AG04449 (cell line): ENCODE measurements at regions of chr16 and their contacts with region 1.

Region 1: DNA sequence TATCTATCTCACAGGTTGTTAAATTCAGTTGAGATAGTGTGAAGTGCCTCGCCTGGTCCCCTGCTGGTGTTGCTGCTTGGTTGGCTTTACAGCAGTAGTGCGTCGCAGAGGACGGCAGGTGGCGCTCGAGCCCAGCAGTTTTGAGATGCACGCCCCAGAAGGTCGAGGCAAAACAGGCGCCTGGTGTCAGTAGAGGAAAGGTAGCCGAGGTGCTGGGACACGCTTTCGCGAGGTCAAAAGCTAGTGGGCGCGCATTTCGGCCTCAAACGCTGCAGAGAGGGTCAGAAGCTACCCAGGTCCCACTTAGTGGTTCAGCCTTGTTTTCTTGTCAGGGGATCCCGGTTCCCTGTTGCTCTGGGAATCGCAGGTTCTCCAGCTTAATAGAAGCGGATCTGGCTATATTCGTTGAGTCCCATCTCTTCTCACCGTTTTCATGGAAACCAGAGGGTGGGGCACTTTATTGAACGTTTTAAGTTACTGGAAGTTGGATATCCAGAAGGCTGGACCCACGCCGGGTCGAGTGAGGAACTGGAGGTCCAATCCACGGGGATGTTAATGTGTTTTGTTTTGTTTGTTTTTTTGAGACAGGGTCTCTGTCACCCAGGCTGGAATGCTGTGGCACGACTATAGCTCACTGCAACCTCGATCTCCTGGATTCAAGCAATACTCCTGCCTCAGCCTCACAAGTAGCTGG is 10.3 kb upstream of the ZFP90 start:
- DNase-seq: no peak
- H3K4me3 ChIP-seq: peak overlapping the region; percentile 32
- CTCF ChIP-seq: peak; percentile 97

Region 2: DNA sequence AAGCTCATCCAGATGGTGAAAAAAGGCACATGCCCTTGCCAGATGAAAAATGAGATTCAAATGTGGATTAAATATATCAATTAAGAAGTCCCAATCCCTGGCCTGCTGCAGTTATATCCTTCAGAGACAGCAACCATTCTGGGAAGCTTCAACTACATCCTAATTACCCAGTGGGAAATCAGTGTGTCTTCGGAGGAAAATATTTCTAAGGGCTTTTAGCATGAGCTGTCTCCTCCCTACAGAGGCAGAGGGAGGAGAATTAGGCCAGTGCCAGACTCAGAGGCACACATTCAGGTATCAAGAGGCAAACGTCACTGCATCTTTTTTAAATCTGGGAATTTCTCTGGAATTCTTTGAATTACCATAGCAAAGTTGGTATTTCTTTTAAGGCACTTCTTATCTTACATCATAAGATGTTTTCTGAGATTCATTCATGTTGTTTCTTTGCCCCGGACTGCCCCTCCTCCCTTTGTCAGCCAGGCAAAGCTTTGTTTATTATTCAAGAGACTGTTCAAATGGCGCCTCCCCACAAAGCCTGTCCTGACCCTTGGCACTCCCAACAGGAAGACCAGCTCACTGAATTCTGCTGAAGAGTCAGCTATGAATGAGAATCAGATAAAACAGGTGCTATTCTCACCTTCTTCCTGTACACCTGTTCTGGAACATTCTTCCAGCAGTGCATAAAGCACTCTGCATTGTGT is 42.2 kb before region 1 on chr16:
- CTCF ChIA-PET with region 1: no interaction called
- POLR2A ChIA-PET with region 1: no interaction called
- DNase-seq: no peak
- H3K4me3 ChIP-seq: no peak overlapping the region
- CTCF ChIP-seq: no peak

Region 3: DNA sequence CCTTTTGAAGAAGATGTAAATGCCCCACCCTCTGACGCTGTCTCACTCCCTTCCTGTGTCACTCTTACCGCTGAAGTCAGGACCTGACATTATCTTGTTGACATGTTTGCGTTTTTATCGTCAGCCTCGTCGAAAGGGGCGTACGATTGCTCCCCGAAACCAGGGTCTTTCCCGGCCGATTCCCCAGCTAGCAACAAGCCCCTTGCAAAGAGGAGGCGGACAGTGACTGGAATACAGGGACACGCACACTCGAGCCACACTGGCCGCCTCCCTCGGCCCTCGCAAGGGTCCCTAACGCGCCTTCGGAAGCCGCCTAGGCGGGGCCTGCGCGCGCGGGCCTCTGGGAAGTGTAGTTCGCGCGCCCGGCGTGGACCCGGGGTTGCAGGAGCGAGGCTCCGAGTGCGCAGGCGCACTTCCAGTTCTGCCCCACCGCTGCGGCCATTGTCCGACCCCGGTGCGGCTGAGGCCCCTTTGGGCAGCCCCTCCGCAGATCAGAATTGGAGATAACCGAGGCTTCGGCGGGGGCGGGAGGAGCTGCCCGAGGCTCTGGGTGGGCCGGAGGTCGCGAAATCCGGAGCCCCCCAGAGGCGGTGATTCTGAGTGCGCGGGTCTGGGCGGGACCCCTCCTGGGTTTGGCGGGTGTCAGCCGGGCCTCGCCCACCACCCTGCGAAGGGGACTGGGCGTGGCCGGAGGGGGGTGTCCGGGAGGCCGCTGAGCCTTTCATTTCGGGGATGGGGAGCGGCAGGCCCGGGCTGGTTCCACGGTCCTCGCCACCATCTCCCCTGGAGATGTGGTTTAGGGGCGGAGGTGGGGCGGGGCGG is 10.3 kb after region 1 on chr16 and contains the start of gene ZFP90:
- CTCF ChIA-PET with region 1: interaction called, 35 read pairs
- POLR2A ChIA-PET with region 1: interaction called, 4 read pairs
- DNase-seq: peak; percentile 4
- H3K4me3 ChIP-seq: peak within 1 kb of the TSS; percentile 73
- CTCF ChIP-seq: no peak

Region 4: DNA sequence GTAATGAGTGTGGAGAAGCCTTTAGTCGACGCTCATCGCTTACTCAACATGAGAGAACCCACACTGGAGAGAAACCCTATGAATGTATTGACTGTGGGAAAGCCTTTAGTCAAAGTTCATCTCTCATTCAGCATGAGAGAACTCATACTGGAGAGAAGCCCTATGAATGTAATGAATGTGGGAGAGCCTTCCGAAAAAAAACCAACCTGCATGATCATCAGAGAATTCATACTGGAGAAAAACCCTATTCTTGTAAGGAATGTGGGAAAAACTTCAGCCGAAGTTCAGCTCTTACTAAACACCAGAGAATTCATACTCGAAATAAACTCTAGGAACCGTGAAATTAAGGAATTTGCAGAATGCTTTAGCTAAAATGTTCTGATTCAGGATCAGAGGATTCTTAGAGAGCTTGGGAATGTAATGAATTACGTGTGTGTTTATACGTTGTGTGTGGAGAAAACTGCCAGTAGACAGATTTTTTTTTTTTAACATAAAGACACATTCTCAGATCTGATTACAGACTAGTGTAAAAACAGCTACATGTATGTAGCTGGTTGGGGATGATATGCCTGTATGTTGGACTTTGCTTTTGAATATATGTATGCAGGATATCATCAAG is 35.6 kb after region 1 on chr16:
- CTCF ChIA-PET with region 1: interaction called, 10 read pairs
- POLR2A ChIA-PET with region 1: no interaction called
- DNase-seq: no peak
- H3K4me3 ChIP-seq: no peak overlapping the region
- CTCF ChIP-seq: no peak